GM12878 (cell line): ENCODE measurements at regions of chr13 and their contacts with region 1.

Region 1: GRCh38 chr13:34076943-34077703 is 259.2 kb downstream of the RFC3 start:
- DNase-seq: no peak
- ATAC-seq: peak; percentile 62
- H3K4me3 ChIP-seq: no peak overlapping the region
- H3K27ac ChIP-seq: no peak overlapping the region
- H3K4me1 ChIP-seq: no peaks in the 10 kb centered on the region
- H3K27me3 ChIP-seq: no peaks in the 10 kb centered on the region
- CTCF ChIP-seq: peak; percentile 42 to 56 (median 51); a peak in 5 of 6 replicates
- EP300 ChIP-seq: no peak
- POLR2A ChIP-seq: no peak
- RAD21 ChIP-seq: peak; percentile 89

Region 2: GRCh38 chr13:33678906-33679657 is 398.0 kb before region 1 on chr13:
- CTCF ChIA-PET with region 1: interaction called, 6 read pairs
- POLR2A ChIA-PET with region 1: no interaction called
- RAD21 ChIA-PET with region 1: no interaction called
- SMC1A ChIA-PET with region 1: interaction called, 9 read pairs
- in situ Hi-C with region 1: no loop called
- intact Hi-C with region 1: loop called (anchors 2 kb)
- DNase-seq: peak; percentile 98
- ATAC-seq: peak; percentile 97
- H3K4me3 ChIP-seq: peak overlapping the region; percentile 77
- H3K27ac ChIP-seq: peak overlapping the region; percentile 95
- H3K4me1 ChIP-seq: peaks cover 5% of the 10 kb centered on the region; the same call in 1 of the 2 replicates
- H3K27me3 ChIP-seq: no peaks in the 10 kb centered on the region
- CTCF ChIP-seq: no peak
- EP300 ChIP-seq: peak; percentile 75 to 82; a peak in 2 of 4 replicates
- POLR2A ChIP-seq: peak; percentile 90
- RAD21 ChIP-seq: 0 out of 2 replicates have a peak, but pooled peaks have one; percentile 0

Region 3: GRCh38 chr13:33799950-33800592 is 277.1 kb before region 1 on chr13:
- CTCF ChIA-PET with region 1: interaction called, 15 read pairs
- POLR2A ChIA-PET with region 1: no interaction called
- RAD21 ChIA-PET with region 1: interaction called, 20 read pairs
- SMC1A ChIA-PET with region 1: interaction called, 27 read pairs
- in situ Hi-C with region 1: no loop called
- intact Hi-C with region 1: loop called (anchors 10 kb)
- DNase-seq: no peak
- ATAC-seq: peak; percentile 62
- H3K4me3 ChIP-seq: no peak overlapping the region
- H3K27ac ChIP-seq: no peak overlapping the region
- H3K4me1 ChIP-seq: peaks cover 8% of the 10 kb centered on the region
- H3K27me3 ChIP-seq: no peaks in the 10 kb centered on the region
- CTCF ChIP-seq: peak; percentile 17 to 48 (median 35); a peak in 4 of 6 replicates
- EP300 ChIP-seq: no peak
- POLR2A ChIP-seq: no peak
- RAD21 ChIP-seq: peak; percentile 51

Region 4: DNA sequence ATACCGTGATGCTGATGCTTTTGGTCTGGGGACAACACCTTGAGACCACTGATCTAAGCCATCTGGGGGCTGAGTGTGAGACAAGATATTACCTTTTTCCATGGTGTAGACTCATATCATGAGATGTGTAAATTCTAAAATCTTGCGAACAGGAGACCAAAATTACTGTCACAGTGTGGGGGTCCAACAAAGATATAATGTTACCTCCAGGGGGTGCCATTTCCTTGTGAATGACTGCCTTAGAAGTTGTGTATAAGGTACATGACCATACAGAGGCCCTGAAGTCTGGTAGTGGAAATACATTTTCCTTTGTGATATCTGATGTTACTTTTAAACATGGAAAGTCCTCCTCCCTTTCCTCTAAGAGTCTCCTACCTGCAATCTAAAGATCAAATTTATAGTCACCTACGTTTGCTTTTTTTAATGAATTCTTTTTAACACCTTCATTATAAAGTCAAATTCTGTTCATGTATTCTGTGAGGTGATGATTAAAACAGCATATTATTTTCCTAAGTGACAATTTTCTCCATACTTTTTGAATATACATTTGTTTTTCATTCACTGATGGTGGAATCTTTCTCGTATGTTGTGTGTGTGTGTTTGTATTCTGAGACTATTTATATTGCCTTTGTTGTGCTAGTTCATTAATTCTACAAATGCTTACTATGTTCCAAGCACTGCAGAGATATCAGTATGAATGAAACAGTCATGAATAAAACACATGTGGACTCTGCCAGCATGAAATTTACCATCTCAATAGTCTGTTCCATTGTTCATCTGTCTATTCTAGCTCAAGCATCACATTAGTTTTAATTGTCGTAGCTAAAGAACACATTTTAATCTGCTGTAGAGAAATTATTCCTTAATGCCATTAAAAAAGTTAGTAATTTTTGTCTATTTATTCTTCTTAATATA is 145.5 kb before region 1 on chr13:
- CTCF ChIA-PET with region 1: interaction called, 22 read pairs
- POLR2A ChIA-PET with region 1: no interaction called
- RAD21 ChIA-PET with region 1: interaction called, 13 read pairs
- SMC1A ChIA-PET with region 1: interaction called, 22 read pairs
- in situ Hi-C with region 1: loop called (anchors 5 kb)
- intact Hi-C with region 1: loop called (anchors 1 kb)
- DNase-seq: peak; percentile 4
- ATAC-seq: peak; percentile 93
- H3K4me3 ChIP-seq: no peak overlapping the region
- H3K27ac ChIP-seq: no peak overlapping the region
- H3K4me1 ChIP-seq: 0 out of 2 replicates have a peak, but pooled peaks cover 3% of the 10 kb centered on the region
- H3K27me3 ChIP-seq: no peaks in the 10 kb centered on the region
- CTCF ChIP-seq: peak; percentile 44 to 61 (median 44); a peak in 5 of 6 replicates
- EP300 ChIP-seq: no peak
- POLR2A ChIP-seq: no peak
- RAD21 ChIP-seq: peak; percentile 93